Endothelial cell of umbilical vein (primary cell): ENCODE measurements at regions of chr18 and their contacts with region 1.

Region 1: DNA sequence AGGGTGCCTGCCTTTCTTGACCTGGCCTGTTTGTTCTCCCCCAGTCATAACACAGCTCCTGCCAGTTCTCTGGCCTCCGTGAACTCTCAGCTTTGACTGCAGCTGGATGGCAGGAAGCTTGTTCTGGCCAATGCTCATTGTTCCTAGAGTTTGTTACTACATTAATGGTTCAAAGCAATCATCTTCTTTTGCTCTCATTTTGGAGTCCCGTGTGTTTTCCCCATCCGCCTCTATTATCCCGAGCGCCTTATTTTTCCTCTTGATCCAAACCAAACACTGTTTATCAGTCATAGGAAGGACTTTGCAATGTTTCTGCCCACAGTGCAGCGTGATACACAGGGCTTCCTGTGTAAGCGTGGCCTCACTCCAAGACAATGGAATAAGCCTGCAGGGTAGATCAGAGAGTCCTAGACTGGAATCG is 184.3 kb upstream of the APCDD1 start:
- DNase-seq: peak; percentile 99
- H3K4me3 ChIP-seq: no peak overlapping the region
- H3K27ac ChIP-seq: peak overlapping the region; percentile 94
- H3K4me1 ChIP-seq: peaks cover 27% of the 10 kb centered on the region
- H3K27me3 ChIP-seq: no peaks in the 10 kb centered on the region
- CTCF ChIP-seq: no peak
- POLR2A ChIP-seq: no peak

Region 2: DNA sequence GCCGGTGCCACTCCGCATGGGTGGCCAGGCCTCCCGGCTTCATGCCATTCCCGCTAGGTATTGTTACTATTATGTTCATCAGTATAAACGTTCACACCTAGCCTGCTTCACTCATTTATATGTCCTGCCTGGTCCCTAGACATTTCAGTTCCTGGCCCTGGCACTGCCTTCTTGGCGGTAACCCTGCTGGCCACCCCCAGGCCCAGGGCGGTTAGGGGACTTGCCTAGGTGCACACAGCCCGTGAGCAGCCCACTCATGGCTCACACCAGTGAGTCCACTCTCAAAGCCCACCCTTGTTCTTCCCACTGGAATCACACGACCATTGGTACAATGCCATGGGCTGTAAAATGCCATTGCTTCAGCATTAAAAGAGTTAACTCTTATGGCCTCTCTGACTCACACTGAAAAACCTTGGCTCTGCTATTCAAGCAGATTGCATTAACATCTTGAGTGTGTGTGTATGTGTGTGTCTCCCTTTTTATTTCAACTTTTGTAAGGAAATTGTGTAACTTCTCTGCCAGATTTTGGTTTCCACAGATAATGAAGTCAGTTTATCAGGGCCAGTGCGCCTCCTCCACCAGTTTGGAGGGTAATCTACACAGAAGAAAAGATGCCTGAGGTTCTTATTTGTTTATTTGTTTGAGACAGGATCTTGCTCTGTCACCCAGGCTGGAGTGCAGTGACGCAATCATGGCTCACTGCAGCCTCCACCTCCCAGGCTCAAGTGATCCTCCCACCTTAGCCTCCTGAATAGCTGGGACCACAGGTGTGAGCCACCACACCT is 487.9 kb before region 1 on chr18:
- CTCF ChIA-PET with region 1: no interaction called
- POLR2A ChIA-PET with region 1: no interaction called
- dilution Hi-C with region 1: no loop called
- intact Hi-C with region 1: no loop called
- DNase-seq: no peak
- H3K4me3 ChIP-seq: no peak overlapping the region
- H3K27ac ChIP-seq: no peak overlapping the region
- H3K4me1 ChIP-seq: no peaks in the 10 kb centered on the region
- H3K27me3 ChIP-seq: no peaks in the 10 kb centered on the region
- CTCF ChIP-seq: no peak
- POLR2A ChIP-seq: no peak

Region 3: GRCh38 chr18:10057894-10058791 is 212.0 kb before region 1 on chr18:
- CTCF ChIA-PET with region 1: no interaction called
- POLR2A ChIA-PET with region 1: no interaction called
- dilution Hi-C with region 1: no loop called
- intact Hi-C with region 1: loop called (anchors 5 kb)
- DNase-seq: peak; percentile 66
- H3K4me3 ChIP-seq: no peak overlapping the region
- H3K27ac ChIP-seq: peak overlapping the region; percentile 96
- H3K4me1 ChIP-seq: peaks cover 56% of the 10 kb centered on the region
- H3K27me3 ChIP-seq: no peaks in the 10 kb centered on the region
- CTCF ChIP-seq: no peak
- POLR2A ChIP-seq: peak; percentile 27

Region 4: GRCh38 chr18:10284590-10285282 is 14.6 kb after region 1 on chr18:
- CTCF ChIA-PET with region 1: interaction called, 14 read pairs
- POLR2A ChIA-PET with region 1: interaction called, 3 read pairs
- dilution Hi-C with region 1: no loop called
- intact Hi-C with region 1: no loop called
- DNase-seq: peak; percentile 43
- H3K4me3 ChIP-seq: no peak overlapping the region
- H3K27ac ChIP-seq: no peak overlapping the region
- H3K4me1 ChIP-seq: peaks cover 7% of the 10 kb centered on the region
- H3K27me3 ChIP-seq: no peaks in the 10 kb centered on the region
- CTCF ChIP-seq: no peak
- POLR2A ChIP-seq: no peak

Region 5: GRCh38 chr18:10289951-10290637 is 19.9 kb after region 1 on chr18:
- CTCF ChIA-PET with region 1: interaction called, 8 read pairs
- POLR2A ChIA-PET with region 1: interaction called, 7 read pairs
- dilution Hi-C with region 1: no loop called
- intact Hi-C with region 1: loop called (anchors 1 kb)
- DNase-seq: peak; percentile 84
- H3K4me3 ChIP-seq: no peak overlapping the region
- H3K27ac ChIP-seq: peak overlapping the region; percentile 82
- H3K4me1 ChIP-seq: peaks cover 27% of the 10 kb centered on the region
- H3K27me3 ChIP-seq: no peaks in the 10 kb centered on the region
- CTCF ChIP-seq: no peak
- POLR2A ChIP-seq: no peak

Region 6: GRCh38 chr18:10304853-10305252 is 34.7 kb after region 1 on chr18:
- CTCF ChIA-PET with region 1: no interaction called
- POLR2A ChIA-PET with region 1: no interaction called
- dilution Hi-C with region 1: no loop called
- intact Hi-C with region 1: no loop called
- DNase-seq: no peak
- H3K4me3 ChIP-seq: no peak overlapping the region
- H3K27ac ChIP-seq: no peak overlapping the region
- H3K4me1 ChIP-seq: no peaks in the 10 kb centered on the region
- H3K27me3 ChIP-seq: peaks cover 14 to 17% of the 10 kb centered on the region in 2 experiments
- CTCF ChIP-seq: no peak
- POLR2A ChIP-seq: no peak

Region 7: GRCh38 chr18:10525371-10526210 is 255.4 kb after region 1 on chr18 and contains the start of gene NAPG:
- CTCF ChIA-PET with region 1: no interaction called
- POLR2A ChIA-PET with region 1: no interaction called
- dilution Hi-C with region 1: no loop called
- intact Hi-C with region 1: loop called (anchors 10 kb)
- DNase-seq: peak; percentile 95
- H3K4me3 ChIP-seq: peak within 1 kb of the TSS; percentile 41 to 98 (median 94)
- H3K27ac ChIP-seq: peak within 1 kb of the TSS; percentile 63
- H3K4me1 ChIP-seq: peaks cover 7% of the 10 kb centered on the region
- H3K27me3 ChIP-seq: peaks cover 10 to 11% of the 10 kb centered on the region in 2 experiments
- CTCF ChIP-seq: no peak
- POLR2A ChIP-seq: peak; percentile 60
- total RNA-seq, gene NAPG: 34.1 and 34.7 TPM in 2 replicates